Naive thymus-derived CD4-positive, alpha-beta T cell (primary cell): ENCODE measurements at regions of chr2 and their contacts with region 1.

Region 1: GRCh38 chr2:203578759-203579643 is 43.9 kb upstream of the RAPH1 start:
- DNase-seq: peak in 1 of 9 donors; percentile 47
- ATAC-seq: no peak
- H3K4me3 ChIP-seq: no peak overlapping the region
- H3K4me3 Mint-ChIP-seq: peak overlapping the region in 1 of 10 donors; percentile 63
- H3K27ac ChIP-seq: no peak overlapping the region
- H3K27ac Mint-ChIP-seq: peak overlapping the region in 2 of 9 donors; percentile 8 to 47
- H3K4me1 ChIP-seq: peaks cover 0 to 2% of the 10 kb centered on the region in 2 donors
- H3K4me1 Mint-ChIP-seq: peaks cover 0 to 44% (median 0%) of the 10 kb centered on the region in 7 donors
- H3K27me3 ChIP-seq: no peaks in the 10 kb centered on the region
- H3K27me3 Mint-ChIP-seq: peaks cover 0 to 64% (median 0%) of the 10 kb centered on the region in 5 donors

Region 2: GRCh38 chr2:203535078-203535783 is 43.8 kb before region 1 on chr2 and contains the start of gene RAPH1:
- CTCF ChIA-PET with region 1: no interaction called
- POLR2A ChIA-PET with region 1: no interaction called
- intact Hi-C with region 1: loop called in 1 of 2 experiments (anchors 1 kb)
- DNase-seq: peak; percentile 24 to 72 (median 51)
- ATAC-seq: peak; percentile 77
- H3K4me3 ChIP-seq: peak within 1 kb of the TSS; percentile 71
- H3K4me3 Mint-ChIP-seq: peak within 1 kb of the TSS; percentile 79 to 95 (median 90)
- H3K27ac ChIP-seq: peak within 1 kb of the TSS; percentile 49
- H3K27ac Mint-ChIP-seq: peak within 1 kb of the TSS; percentile 32 to 90 (median 73)
- H3K4me1 ChIP-seq: peaks cover 10 to 15% of the 10 kb centered on the region in 2 donors
- H3K4me1 Mint-ChIP-seq: peaks cover 16 to 30% (median 28%) of the 10 kb centered on the region in 7 donors
- H3K27me3 ChIP-seq: no peaks in the 10 kb centered on the region
- H3K27me3 Mint-ChIP-seq: peaks cover 6 to 75% (median 16%) of the 10 kb centered on the region in 5 donors
- total RNA-seq, gene RAPH1: 1.8 to 5.5 (median 3.0) TPM

Region 3: DNA sequence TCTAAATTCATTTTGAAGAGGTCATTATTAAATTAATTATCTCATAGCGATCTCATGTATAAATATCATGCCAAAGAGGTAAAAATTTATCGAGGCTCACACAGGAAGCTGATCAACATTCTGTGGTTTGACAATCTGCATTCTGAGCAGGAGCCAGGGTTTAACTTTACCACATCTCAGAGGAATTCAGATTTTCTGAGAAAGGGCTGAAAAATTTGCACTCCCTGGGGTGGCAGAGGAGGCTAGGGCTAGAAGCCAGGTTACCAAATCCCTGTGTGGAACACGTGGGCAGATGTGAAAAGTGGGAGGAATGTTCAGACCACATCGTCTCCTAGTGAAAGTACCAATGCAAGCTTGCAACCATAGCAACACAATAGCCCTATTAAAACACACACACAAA is 225.1 kb after region 1 on chr2:
- CTCF ChIA-PET with region 1: no interaction called
- POLR2A ChIA-PET with region 1: no interaction called
- intact Hi-C with region 1: loop called in 1 of 2 experiments (anchors 5 kb)
- DNase-seq: peak in 8 of 9 donors; percentile 27 to 57 (median 42)
- ATAC-seq: peak; percentile 75
- H3K4me3 ChIP-seq: peak overlapping the region; percentile 12
- H3K4me3 Mint-ChIP-seq: peak overlapping the region; percentile 23 to 80 (median 63)
- H3K27ac ChIP-seq: peak overlapping the region; percentile 47
- H3K27ac Mint-ChIP-seq: peak overlapping the region; percentile 1 to 83 (median 76)
- H3K4me1 ChIP-seq: peaks cover 28 to 34% of the 10 kb centered on the region in 2 donors
- H3K4me1 Mint-ChIP-seq: peaks cover 27 to 83% (median 72%) of the 10 kb centered on the region in 7 donors
- H3K27me3 ChIP-seq: no peaks in the 10 kb centered on the region
- H3K27me3 Mint-ChIP-seq: peaks cover 0 to 3% (median 0%) of the 10 kb centered on the region in 5 donors